Naive thymus-derived CD4-positive, alpha-beta T cell (primary cell): ENCODE measurements at regions of chr5 and their contacts with region 1.

Region 1: DNA sequence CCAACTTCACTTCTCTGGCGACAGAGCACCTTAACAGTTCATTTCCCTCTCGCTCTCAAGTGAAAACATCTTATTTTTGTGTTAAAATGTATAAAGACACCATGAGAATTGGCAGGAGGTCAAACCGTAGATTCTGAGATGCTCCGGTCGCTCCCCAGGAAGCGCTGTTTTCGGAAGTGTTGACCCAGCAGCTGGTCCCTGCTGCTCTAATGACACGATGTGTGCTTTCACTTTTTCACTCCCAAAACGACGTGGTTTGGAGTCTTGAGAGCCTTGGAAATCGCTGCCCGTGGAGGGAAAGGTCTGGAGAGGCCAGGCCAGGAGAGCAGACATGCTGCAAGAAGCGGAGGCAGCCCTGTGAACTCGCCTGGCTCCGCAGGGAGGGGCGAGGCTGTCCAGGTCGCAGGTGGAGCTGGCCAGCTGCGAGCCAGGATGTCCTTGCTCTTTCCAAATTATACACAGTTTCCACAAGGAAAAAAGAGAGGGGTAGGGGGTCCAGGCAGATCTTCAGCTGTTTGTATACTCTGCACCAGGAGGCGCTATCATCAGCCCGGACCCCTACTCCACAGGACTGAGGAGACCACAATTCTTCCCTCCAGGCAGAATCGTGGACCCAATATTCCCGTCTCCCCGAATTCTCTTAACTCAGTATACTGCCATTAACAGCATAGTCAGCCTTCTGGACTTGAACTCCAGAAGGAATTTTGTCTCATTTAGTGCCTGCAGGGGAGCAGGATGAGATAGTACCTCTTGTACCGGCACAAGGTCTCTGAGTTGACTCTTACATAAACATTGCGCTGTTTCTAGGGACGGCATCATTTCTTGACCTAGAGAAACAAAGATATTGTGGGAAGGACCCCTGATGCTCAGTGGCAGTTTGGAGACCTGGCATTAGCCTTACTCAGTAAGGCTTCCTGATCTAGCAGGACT is 248.6 kb upstream of the ANKRD55 start:
- DNase-seq: peak in 6 of 9 donors; percentile 19 to 44 (median 33)
- ATAC-seq: peak; percentile 12
- H3K4me3 ChIP-seq: peak overlapping the region; percentile 60
- H3K4me3 Mint-ChIP-seq: peak overlapping the region; percentile 80 to 95 (median 90)
- H3K27ac ChIP-seq: peak overlapping the region; percentile 80
- H3K27ac Mint-ChIP-seq: peak overlapping the region; percentile 86 to 95 (median 90)
- H3K4me1 ChIP-seq: peaks cover 0 to 37% of the 10 kb centered on the region in 2 donors
- H3K4me1 Mint-ChIP-seq: peaks cover 19 to 53% (median 45%) of the 10 kb centered on the region in 7 donors
- H3K27me3 ChIP-seq: no peaks in the 10 kb centered on the region
- H3K27me3 Mint-ChIP-seq: no peaks in the 10 kb centered on the region

Region 2: DNA sequence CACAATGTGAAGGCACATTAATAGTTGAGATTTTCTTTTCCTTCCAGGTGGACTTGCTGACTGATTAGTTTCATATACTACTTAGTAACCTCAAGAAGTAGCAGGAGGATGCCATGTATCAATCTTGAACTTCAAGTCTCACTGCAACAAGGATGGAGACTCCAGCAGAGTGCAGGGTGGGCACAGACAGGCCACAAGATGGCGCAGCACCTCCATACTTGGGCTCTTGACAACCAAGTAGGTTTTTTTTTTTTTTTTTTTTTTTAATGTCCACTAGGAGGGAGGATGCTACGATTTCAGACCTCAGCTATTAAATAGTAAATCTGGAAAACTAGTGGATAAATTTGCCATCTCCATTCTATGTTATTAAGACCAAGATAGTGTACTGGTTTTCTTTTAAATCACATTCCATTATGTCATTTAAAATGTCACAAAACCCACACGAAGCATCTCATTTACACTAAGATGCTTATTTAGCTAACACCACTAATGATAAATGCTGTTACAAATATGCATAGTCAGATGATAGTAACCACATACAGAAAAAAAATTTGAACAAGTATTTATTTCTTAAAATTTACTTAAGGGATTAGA is 545.5 kb before region 1 on chr5:
- CTCF ChIA-PET with region 1: no interaction called
- POLR2A ChIA-PET with region 1: no interaction called
- intact Hi-C with region 1: loop called in 1 of 2 experiments (anchors 10 kb)
- DNase-seq: peak; percentile 44 to 73 (median 66)
- ATAC-seq: peak; percentile 91
- H3K4me3 ChIP-seq: no peak overlapping the region
- H3K4me3 Mint-ChIP-seq: no peak overlapping the region
- H3K27ac ChIP-seq: no peak overlapping the region
- H3K27ac Mint-ChIP-seq: peak overlapping the region in 6 of 9 donors; percentile 11 to 84 (median 38)
- H3K4me1 ChIP-seq: no peaks in the 10 kb centered on the region
- H3K4me1 Mint-ChIP-seq: peaks cover 0 to 35% (median 14%) of the 10 kb centered on the region in 7 donors
- H3K27me3 ChIP-seq: no peaks in the 10 kb centered on the region
- H3K27me3 Mint-ChIP-seq: no peaks in the 10 kb centered on the region

Region 3: DNA sequence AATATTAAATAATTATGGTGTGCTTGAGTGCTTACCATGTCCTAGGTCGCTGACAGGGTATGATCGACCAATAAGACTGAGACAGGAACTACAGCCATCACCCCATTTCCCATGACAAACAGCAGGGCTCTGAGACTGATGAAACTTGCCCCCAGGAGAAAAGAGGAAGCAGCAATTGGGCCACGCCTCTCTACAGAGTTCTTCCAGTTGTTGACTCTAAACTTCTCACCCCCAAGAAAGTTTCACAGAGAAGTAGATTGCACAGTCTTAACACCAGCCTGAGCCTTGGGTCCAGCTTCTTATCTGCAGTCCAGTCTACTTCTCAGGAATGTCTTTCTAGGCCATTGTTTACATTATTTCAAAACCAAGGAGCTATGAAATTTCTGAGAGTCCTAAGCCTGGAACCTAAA is 66.3 kb before region 1 on chr5:
- CTCF ChIA-PET with region 1: no interaction called
- POLR2A ChIA-PET with region 1: no interaction called
- intact Hi-C with region 1: no loop called
- DNase-seq: no peak
- ATAC-seq: peak; percentile 81
- H3K4me3 ChIP-seq: no peak overlapping the region
- H3K4me3 Mint-ChIP-seq: no peak overlapping the region
- H3K27ac ChIP-seq: no peak overlapping the region
- H3K27ac Mint-ChIP-seq: peak overlapping the region in 1 of 9 donors; percentile 4
- H3K4me1 ChIP-seq: no peaks in the 10 kb centered on the region
- H3K4me1 Mint-ChIP-seq: peaks cover 11 to 32% (median 22%) of the 10 kb centered on the region in 7 donors
- H3K27me3 ChIP-seq: no peaks in the 10 kb centered on the region
- H3K27me3 Mint-ChIP-seq: no peaks in the 10 kb centered on the region

Region 4: GRCh38 chr5:56588636-56589480 is 107.2 kb after region 1 on chr5:
- CTCF ChIA-PET with region 1: no interaction called
- POLR2A ChIA-PET with region 1: interaction called, 5 read pairs
- intact Hi-C with region 1: loop called (anchors 1 to 2 kb)
- DNase-seq: peak; percentile 30 to 75 (median 54)
- ATAC-seq: peak; percentile 90
- H3K4me3 ChIP-seq: no peak overlapping the region
- H3K4me3 Mint-ChIP-seq: peak overlapping the region; percentile 23 to 90 (median 68)
- H3K27ac ChIP-seq: peak overlapping the region; percentile 68
- H3K27ac Mint-ChIP-seq: peak overlapping the region; percentile 85 to 97 (median 93)
- H3K4me1 ChIP-seq: peaks cover 30 to 50% of the 10 kb centered on the region in 2 donors
- H3K4me1 Mint-ChIP-seq: peaks cover 36 to 66% (median 62%) of the 10 kb centered on the region in 7 donors
- H3K27me3 ChIP-seq: no peaks in the 10 kb centered on the region
- H3K27me3 Mint-ChIP-seq: peaks cover 0 to 4% (median 0%) of the 10 kb centered on the region in 5 donors

Region 5: DNA sequence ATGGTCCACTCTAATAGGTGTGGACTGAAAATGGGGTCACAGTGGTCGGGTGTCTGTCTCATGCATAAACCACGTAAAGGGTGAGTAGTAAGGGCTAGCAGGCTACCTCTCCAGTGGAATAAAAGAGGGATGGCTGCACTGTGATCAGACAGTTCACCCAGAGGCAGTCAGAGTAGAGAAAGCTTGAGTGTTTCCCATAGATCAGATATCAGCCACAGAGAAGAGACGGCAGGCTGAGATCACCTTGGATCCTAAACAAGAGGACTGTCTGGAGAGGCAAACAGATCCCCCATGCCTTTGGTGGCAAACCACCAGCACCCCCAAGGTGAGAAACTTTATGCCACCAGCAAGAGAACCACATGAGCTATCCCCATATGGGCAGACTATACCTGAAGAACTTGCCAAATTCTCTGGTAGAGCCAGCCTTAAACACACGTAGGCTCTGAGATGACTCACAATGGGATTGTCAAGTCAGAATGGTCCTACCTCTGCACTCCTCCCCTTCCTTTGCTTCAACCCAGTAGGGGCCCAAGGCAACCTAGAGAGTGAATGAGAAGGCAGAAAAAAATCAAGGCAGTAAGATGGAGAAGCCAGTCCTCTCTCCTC is 128.5 kb after region 1 on chr5:
- CTCF ChIA-PET with region 1: no interaction called
- POLR2A ChIA-PET with region 1: interaction called, 5 read pairs
- intact Hi-C with region 1: loop called in 1 of 2 experiments (anchors 5 kb)
- DNase-seq: peak in 1 of 9 donors; percentile 29
- ATAC-seq: peak; percentile 41
- H3K4me3 ChIP-seq: no peak overlapping the region
- H3K4me3 Mint-ChIP-seq: peak overlapping the region in 7 of 10 donors; percentile 12 to 80 (median 39)
- H3K27ac ChIP-seq: no peak overlapping the region
- H3K27ac Mint-ChIP-seq: peak overlapping the region in 8 of 9 donors; percentile 3 to 79 (median 74)
- H3K4me1 ChIP-seq: peaks cover 20 to 58% of the 10 kb centered on the region in 2 donors
- H3K4me1 Mint-ChIP-seq: peaks cover 56 to 93% (median 89%) of the 10 kb centered on the region in 7 donors
- H3K27me3 ChIP-seq: no peaks in the 10 kb centered on the region
- H3K27me3 Mint-ChIP-seq: no peaks in the 10 kb centered on the region

Region 6: GRCh38 chr5:56625541-56625940 is 143.8 kb after region 1 on chr5:
- CTCF ChIA-PET with region 1: no interaction called
- POLR2A ChIA-PET with region 1: no interaction called
- intact Hi-C with region 1: no loop called
- DNase-seq: no peak
- ATAC-seq: no peak
- H3K4me3 ChIP-seq: no peak overlapping the region
- H3K4me3 Mint-ChIP-seq: no peak overlapping the region
- H3K27ac ChIP-seq: no peak overlapping the region
- H3K27ac Mint-ChIP-seq: no peak overlapping the region
- H3K4me1 ChIP-seq: no peaks in the 10 kb centered on the region
- H3K4me1 Mint-ChIP-seq: peaks cover 0 to 8% (median 0%) of the 10 kb centered on the region in 7 donors
- H3K27me3 ChIP-seq: no peaks in the 10 kb centered on the region
- H3K27me3 Mint-ChIP-seq: peaks cover 0 to 5% (median 0%) of the 10 kb centered on the region in 5 donors

Region 7: GRCh38 chr5:56698463-56699381 is 217.0 kb after region 1 on chr5:
- CTCF ChIA-PET with region 1: interaction called, 3 read pairs
- POLR2A ChIA-PET with region 1: interaction called, 3 read pairs
- intact Hi-C with region 1: loop called in 1 of 2 experiments (anchors 5 kb)
- DNase-seq: no peak
- ATAC-seq: no peak
- H3K4me3 ChIP-seq: no peak overlapping the region
- H3K4me3 Mint-ChIP-seq: peak overlapping the region in 8 of 10 donors; percentile 33 to 70 (median 54)
- H3K27ac ChIP-seq: peak overlapping the region; percentile 25
- H3K27ac Mint-ChIP-seq: peak overlapping the region; percentile 4 to 87 (median 69)
- H3K4me1 ChIP-seq: peaks cover 12 to 60% of the 10 kb centered on the region in 2 donors
- H3K4me1 Mint-ChIP-seq: peaks cover 47 to 99% (median 80%) of the 10 kb centered on the region in 7 donors
- H3K27me3 ChIP-seq: no peaks in the 10 kb centered on the region
- H3K27me3 Mint-ChIP-seq: peaks cover 0 to 6% (median 0%) of the 10 kb centered on the region in 5 donors

Region 8: DNA sequence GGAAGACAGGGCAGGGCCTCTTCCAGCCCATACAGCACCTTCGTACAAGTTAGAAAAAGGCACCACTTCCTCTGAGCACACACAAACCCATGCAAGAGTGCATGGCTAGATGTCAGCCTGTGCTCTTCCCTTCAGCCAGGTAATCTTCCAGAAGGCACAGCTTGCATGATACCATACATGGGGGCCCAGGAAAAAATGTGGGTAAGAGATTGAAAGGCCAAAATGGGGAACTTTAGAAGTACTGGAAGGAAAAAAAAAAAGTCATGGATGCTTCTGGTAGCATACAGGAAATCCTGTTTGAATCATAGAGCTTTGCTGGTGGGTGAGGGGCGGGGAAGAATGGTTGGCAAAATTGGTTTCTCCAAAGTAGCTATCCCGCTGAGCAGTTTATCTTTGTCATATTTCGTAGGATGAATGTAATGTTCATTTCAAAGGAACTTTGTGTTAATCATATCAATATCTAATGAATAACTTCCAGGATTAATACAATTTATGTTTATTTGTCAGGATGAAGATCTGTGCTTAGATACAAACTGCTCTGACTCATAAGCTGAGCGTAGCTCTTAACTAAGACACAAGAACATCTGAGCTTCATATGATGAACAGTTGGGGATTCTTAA is 255.4 kb after region 1 on chr5:
- CTCF ChIA-PET with region 1: interaction called, 3 read pairs
- POLR2A ChIA-PET with region 1: interaction called, 6 read pairs
- intact Hi-C with region 1: loop called in 1 of 2 experiments (anchors 5 kb)
- DNase-seq: peak in 1 of 9 donors; percentile 6
- ATAC-seq: peak; percentile 57
- H3K4me3 ChIP-seq: peak overlapping the region; percentile 28
- H3K4me3 Mint-ChIP-seq: peak overlapping the region; percentile 50 to 88 (median 67)
- H3K27ac ChIP-seq: peak overlapping the region; percentile 68
- H3K27ac Mint-ChIP-seq: peak overlapping the region; percentile 74 to 94 (median 89)
- H3K4me1 ChIP-seq: peaks cover 14 to 29% of the 10 kb centered on the region in 2 donors
- H3K4me1 Mint-ChIP-seq: peaks cover 40 to 64% (median 51%) of the 10 kb centered on the region in 7 donors
- H3K27me3 ChIP-seq: no peaks in the 10 kb centered on the region
- H3K27me3 Mint-ChIP-seq: peaks cover 0 to 2% (median 0%) of the 10 kb centered on the region in 5 donors

Region 9: GRCh38 chr5:56838409-56839039 is 356.8 kb after region 1 on chr5:
- CTCF ChIA-PET with region 1: interaction called, 11 read pairs
- POLR2A ChIA-PET with region 1: interaction called, 4 read pairs
- intact Hi-C with region 1: loop called (anchors 1 kb)
- DNase-seq: peak in 7 of 9 donors; percentile 33 to 61 (median 48)
- ATAC-seq: peak; percentile 75
- H3K4me3 ChIP-seq: no peak overlapping the region
- H3K4me3 Mint-ChIP-seq: peak overlapping the region; percentile 19 to 79 (median 57)
- H3K27ac ChIP-seq: peak overlapping the region; percentile 42
- H3K27ac Mint-ChIP-seq: peak overlapping the region; percentile 8 to 95 (median 78)
- H3K4me1 ChIP-seq: peaks cover 8 to 87% of the 10 kb centered on the region in 2 donors
- H3K4me1 Mint-ChIP-seq: peaks cover 63 to 95% (median 90%) of the 10 kb centered on the region in 7 donors
- H3K27me3 ChIP-seq: no peaks in the 10 kb centered on the region
- H3K27me3 Mint-ChIP-seq: no peaks in the 10 kb centered on the region